Activated CD4-positive, alpha-beta T cell treated with anti-CD3 and anti-CD28 coated beads for 36 hours (primary cell): ENCODE measurements at regions of chr6 and their contacts with region 1.

Region 1: DNA sequence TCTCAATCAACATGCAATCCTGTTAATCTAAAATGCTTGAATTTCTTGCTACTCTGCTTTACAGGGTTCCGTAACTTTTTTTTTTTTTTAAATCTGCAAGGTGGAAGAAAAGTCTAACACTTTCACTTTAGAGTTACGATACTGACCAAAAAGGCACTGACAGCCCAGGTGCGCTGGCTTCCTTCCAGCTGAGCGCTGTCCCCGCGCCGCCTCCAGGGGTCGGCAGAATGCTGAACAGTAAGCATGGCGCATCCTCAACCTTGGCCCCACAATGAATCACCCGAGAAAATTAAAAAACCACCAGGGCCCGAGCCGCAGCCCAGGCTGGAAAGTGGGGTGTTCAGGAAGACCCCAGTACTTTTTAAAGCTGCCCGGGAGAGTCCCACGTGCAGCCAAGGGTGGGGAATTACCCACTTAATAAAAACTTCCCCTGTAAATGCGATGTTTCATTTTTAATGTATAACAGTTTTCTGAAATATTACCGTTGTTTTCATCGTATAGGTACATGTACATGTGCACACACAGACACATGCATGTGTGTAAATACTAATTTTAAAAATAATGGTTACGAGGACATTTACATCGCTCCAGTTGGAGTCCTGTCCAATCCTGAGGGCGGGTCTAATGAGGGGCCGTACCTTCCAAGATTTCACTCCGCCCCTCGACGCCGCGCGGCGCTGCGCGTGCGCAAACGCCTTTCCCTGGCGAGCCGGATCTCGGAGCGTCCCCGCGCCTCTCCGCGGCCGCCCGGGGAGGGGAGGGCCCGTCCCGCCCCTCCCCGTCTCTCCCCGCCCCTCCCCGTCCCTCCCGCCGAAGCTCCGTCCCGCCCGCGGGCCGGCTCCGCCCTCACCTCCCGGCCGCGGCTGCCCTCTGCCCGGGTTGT is at the start of gene GINM1:
- DNase-seq: peak; percentile 97
- ATAC-seq: peak; percentile 90
- H3K4me3 Mint-ChIP-seq: peak within 1 kb of the TSS; percentile 91
- H3K27ac Mint-ChIP-seq: peak within 1 kb of the TSS; percentile 89
- H3K4me1 Mint-ChIP-seq: peaks cover 20% of the 10 kb centered on the region
- H3K27me3 Mint-ChIP-seq: no peaks in the 10 kb centered on the region
- total RNA-seq, gene GINM1: 15.9 to 17.3 TPM

Region 2: DNA sequence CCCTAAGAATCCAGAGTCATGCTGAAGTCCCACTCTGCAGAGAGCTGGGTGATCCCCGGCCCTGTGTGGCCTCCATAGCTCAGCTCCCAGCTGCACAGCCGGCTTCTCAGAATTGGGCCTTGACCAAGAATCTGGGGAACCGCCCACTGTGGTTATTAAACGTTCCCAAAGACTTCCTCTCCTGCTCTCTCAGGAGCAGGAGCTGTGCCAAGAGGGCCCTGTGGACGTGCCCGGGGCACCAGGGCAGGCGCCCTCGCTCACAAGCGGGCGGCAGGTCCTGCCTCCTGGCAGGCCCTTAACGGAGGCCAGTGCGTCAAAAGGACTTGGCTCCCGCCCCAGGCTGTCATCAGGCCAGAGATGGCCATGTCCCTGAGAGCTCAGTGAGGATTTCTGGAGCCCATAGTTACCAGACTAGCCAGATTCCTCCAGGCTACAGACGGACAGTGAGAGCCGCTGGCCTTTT is 111.4 kb before region 1 on chr6:
- CTCF ChIA-PET with region 1: no interaction called
- POLR2A ChIA-PET with region 1: no interaction called
- intact Hi-C with region 1: no loop called
- DNase-seq: no peak
- ATAC-seq: no peak
- H3K4me3 Mint-ChIP-seq: no peak overlapping the region
- H3K27ac Mint-ChIP-seq: no peak overlapping the region
- H3K4me1 Mint-ChIP-seq: peaks cover 18% of the 10 kb centered on the region
- H3K27me3 Mint-ChIP-seq: no peaks in the 10 kb centered on the region

Region 3: DNA sequence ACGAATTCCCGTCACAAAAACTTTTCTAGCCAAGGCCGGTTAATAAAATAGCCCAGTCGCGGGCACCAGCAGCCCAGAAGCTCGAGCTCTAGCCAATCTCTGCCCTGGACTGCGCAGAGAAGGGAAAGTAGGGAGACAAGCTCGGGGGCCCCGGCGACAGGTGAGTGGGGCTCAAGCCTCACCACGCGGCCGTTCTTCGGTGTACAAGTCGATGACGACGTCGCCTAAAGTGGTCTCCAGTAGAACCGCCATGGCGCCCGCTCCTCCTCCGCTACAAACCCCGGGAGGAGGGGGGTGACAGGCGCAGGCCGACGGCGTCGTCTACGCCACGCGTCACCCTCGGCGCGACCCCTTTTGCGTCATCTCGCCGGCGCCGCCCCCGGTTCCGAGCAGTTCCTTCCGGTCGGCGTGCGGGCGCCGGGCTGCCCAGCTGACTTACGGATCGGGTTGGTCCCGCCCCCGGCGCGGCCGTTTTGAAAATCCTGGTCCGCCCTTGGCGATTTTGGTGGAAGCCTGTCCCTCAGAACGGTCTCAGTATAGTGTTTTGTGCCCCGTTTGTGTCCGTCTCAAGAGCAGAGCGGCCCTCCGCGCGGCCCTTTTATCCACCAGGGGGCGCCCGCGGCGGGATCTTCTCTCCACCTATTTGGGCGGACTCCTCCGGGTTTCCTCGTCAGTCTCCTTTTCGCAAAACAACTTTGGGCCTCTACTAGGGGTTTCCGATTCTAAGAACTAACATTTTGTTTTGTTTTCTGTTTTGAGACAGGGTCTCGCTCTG is 19.8 kb before region 1 on chr6 and contains the start of gene PPIL4:
- CTCF ChIA-PET with region 1: interaction called, 58 read pairs
- POLR2A ChIA-PET with region 1: no interaction called
- intact Hi-C with region 1: loop called (anchors 1 kb)
- DNase-seq: peak; percentile 98
- ATAC-seq: peak; percentile 85
- H3K4me3 Mint-ChIP-seq: peak within 1 kb of the TSS; percentile 97
- H3K27ac Mint-ChIP-seq: peak within 1 kb of the TSS; percentile 98
- H3K4me1 Mint-ChIP-seq: peaks cover 42% of the 10 kb centered on the region
- H3K27me3 Mint-ChIP-seq: no peaks in the 10 kb centered on the region
- total RNA-seq, gene PPIL4: 22.6 to 26.8 TPM

Region 4: DNA sequence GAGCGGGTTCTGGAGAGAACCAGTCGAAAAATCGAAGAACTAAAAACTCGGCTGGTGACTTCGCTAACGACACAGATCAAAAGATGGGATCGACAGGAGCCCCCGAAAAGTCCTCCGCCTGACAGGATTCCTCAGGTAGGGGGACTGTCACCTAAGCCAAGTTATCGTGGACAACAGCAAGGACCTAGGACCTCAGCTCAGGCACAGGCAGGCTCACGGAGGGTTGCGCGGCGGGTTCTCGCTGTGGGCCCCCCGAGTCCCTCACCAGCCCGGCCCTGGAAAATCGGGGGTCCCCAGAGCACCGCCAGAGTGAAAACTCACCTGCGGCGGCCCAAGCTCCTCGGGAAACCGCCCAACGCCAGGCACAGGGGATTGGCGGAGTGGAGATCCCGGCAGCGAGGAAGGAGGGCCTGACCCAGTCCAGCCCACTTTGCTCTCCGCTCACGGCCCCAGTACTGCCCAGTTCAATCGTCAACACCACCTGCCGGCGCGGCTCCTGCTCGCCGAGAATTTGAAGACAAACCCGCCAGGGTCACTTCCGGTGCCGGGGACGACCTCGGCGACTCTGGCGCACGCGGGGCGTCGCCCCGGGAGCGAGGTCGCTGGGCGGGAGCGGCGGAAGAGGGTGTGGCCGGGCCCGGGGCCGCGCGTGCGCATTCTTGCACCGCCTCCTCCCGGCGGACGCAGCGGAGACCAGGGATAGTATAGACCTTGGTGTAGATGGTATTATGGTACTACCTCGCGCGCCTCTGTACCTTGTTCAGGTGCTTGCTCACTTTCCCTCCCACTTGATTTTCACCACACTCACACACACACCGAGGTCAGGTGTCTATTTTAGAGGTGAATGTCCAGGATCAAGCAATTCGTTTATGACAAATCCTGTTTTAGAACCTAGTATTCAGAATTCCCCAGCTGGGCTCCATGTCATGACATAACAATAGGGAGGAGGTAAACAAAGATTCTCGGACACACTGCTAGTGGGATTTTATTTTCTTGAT is 82.7 kb after region 1 on chr6 and contains the start of gene KATNA1:
- CTCF ChIA-PET with region 1: interaction called, 3 read pairs
- POLR2A ChIA-PET with region 1: no interaction called
- intact Hi-C with region 1: loop called (anchors 1 kb)
- DNase-seq: peak; percentile 95
- ATAC-seq: peak; percentile 96
- H3K4me3 Mint-ChIP-seq: peak within 1 kb of the TSS; percentile 90
- H3K27ac Mint-ChIP-seq: peak within 1 kb of the TSS; percentile 87
- H3K4me1 Mint-ChIP-seq: peaks cover 20% of the 10 kb centered on the region
- H3K27me3 Mint-ChIP-seq: no peaks in the 10 kb centered on the region
- total RNA-seq, gene KATNA1: 18.1 to 21.6 TPM

Region 5: GRCh38 chr6:149717588-149718458 is 152.1 kb after region 1 on chr6 and contains the start of gene LATS1:
- CTCF ChIA-PET with region 1: no interaction called
- POLR2A ChIA-PET with region 1: no interaction called
- intact Hi-C with region 1: loop called (anchors 1 to 2 kb)
- DNase-seq: peak; percentile 97
- ATAC-seq: peak; percentile 93
- H3K4me3 Mint-ChIP-seq: peak within 1 kb of the TSS; percentile 88
- H3K27ac Mint-ChIP-seq: peak within 1 kb of the TSS; percentile 98
- H3K4me1 Mint-ChIP-seq: peaks cover 25% of the 10 kb centered on the region
- H3K27me3 Mint-ChIP-seq: no peaks in the 10 kb centered on the region
- total RNA-seq, gene LATS1: 21.2 to 23.5 TPM

Region 6: GRCh38 chr6:149863697-149864577 is 298.2 kb after region 1 on chr6 and contains the start of gene LRP11:
- CTCF ChIA-PET with region 1: interaction called, 4 read pairs
- POLR2A ChIA-PET with region 1: no interaction called
- intact Hi-C with region 1: loop called in 1 of 2 experiments (anchors 1 kb)
- DNase-seq: peak; percentile 91
- ATAC-seq: peak; percentile 88
- H3K4me3 Mint-ChIP-seq: peak within 1 kb of the TSS; percentile 68
- H3K27ac Mint-ChIP-seq: peak within 1 kb of the TSS; percentile 16
- H3K4me1 Mint-ChIP-seq: peaks cover 10% of the 10 kb centered on the region
- H3K27me3 Mint-ChIP-seq: peaks cover 9% of the 10 kb centered on the region
- total RNA-seq, gene LRP11: 5.1 TPM

Region 7: GRCh38 chr6:149963462-149964307 is 397.9 kb after region 1 on chr6 and contains the start of gene ULBP1:
- CTCF ChIA-PET with region 1: no interaction called
- POLR2A ChIA-PET with region 1: no interaction called
- intact Hi-C with region 1: loop called in 1 of 2 experiments (anchors 1 kb)
- DNase-seq: peak; percentile 93
- ATAC-seq: peak; percentile 76
- H3K4me3 Mint-ChIP-seq: peak within 1 kb of the TSS; percentile 77
- H3K27ac Mint-ChIP-seq: peak within 1 kb of the TSS; percentile 91
- H3K4me1 Mint-ChIP-seq: peaks cover 22% of the 10 kb centered on the region
- H3K27me3 Mint-ChIP-seq: peaks cover 69% of the 10 kb centered on the region
- total RNA-seq, gene ULBP1: 2.7 to 5.0 TPM

Region 8: DNA sequence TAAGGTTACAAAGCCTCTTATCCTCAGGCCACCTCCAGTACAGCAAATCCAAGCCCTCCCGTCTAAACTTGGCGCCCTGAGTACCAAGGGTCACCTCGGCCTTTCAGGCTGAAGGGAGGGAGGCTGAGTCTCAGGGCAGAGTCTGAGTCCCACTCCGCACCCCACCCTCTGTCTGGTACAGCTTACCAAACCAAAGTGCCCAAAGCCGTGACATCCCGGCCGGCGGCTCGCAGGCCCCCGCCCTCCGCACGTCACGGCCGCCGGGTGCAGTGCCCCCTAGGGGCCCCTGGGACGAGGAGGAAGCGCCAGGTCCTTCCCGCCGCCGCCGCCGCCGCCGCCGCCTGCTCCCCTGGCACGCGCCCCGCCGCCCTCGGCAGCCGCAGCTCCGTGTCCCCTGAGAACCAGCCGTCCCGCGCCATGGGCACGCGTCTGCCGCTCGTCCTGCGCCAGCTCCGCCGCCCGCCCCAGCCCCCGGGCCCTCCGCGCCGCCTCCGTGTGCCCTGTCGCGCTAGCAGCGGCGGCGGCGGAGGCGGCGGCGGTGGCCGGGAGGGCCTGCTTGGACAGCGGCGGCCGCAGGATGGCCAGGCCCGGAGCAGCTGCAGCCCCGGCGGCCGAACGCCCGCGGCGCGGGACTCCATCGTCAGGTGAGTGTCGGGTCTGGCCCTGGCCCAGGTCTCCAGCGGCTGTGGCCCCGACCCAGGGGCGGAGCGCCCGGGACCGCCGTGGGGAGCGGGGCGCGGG is 1299.8 kb after region 1 on chr6 and contains the start of gene MTHFD1L:
- CTCF ChIA-PET with region 1: no interaction called
- POLR2A ChIA-PET with region 1: no interaction called
- intact Hi-C with region 1: loop called in 1 of 2 experiments (anchors 2 kb)
- DNase-seq: peak; percentile 89
- ATAC-seq: peak; percentile 74
- H3K4me3 Mint-ChIP-seq: peak within 1 kb of the TSS; percentile 81
- H3K27ac Mint-ChIP-seq: peak within 1 kb of the TSS; percentile 94
- H3K4me1 Mint-ChIP-seq: peaks cover 38% of the 10 kb centered on the region
- H3K27me3 Mint-ChIP-seq: peaks cover 12% of the 10 kb centered on the region
- total RNA-seq, gene MTHFD1L: 103 to 129 TPM